Common myeloid progenitor, CD34-positive (primary cell): ENCODE measurements at regions of chr12 and their contacts with region 1.

Region 1: GRCh38 chr12:109432841-109433304 is 44.2 kb downstream of the KCTD10 start:
- DNase-seq: peak; percentile 68 to 84 (median 81)
- H3K4me3 ChIP-seq: peak overlapping the region in 4 of 7 experiments; percentile 4 to 69 (median 28)
- H3K27ac ChIP-seq: no peak overlapping the region
- H3K4me1 ChIP-seq: peaks cover 0 to 7% (median 2%) of the 10 kb centered on the region in 4 experiments
- H3K27me3 ChIP-seq: no peaks in the 10 kb centered on the region

Region 2: GRCh38 chr12:109362471-109362870 is 70.4 kb before region 1 on chr12:
- CTCF ChIA-PET with region 1: no interaction called
- POLR2A ChIA-PET with region 1: no interaction called
- DNase-seq: no peak
- H3K4me3 ChIP-seq: no peak overlapping the region
- H3K27ac ChIP-seq: no peak overlapping the region
- H3K4me1 ChIP-seq: peaks cover 0 to 3% (median 1%) of the 10 kb centered on the region in 4 experiments
- H3K27me3 ChIP-seq: no peaks in the 10 kb centered on the region

Region 3: GRCh38 chr12:109449845-109450532 is 17.1 kb after region 1 on chr12:
- CTCF ChIA-PET with region 1: interaction called, 11 read pairs
- POLR2A ChIA-PET with region 1: no interaction called
- DNase-seq: peak in 2 of 3 donors; percentile 10 to 17
- H3K4me3 ChIP-seq: no peak overlapping the region
- H3K27ac ChIP-seq: no peak overlapping the region
- H3K4me1 ChIP-seq: no peaks in the 10 kb centered on the region
- H3K27me3 ChIP-seq: no peaks in the 10 kb centered on the region

Region 4: DNA sequence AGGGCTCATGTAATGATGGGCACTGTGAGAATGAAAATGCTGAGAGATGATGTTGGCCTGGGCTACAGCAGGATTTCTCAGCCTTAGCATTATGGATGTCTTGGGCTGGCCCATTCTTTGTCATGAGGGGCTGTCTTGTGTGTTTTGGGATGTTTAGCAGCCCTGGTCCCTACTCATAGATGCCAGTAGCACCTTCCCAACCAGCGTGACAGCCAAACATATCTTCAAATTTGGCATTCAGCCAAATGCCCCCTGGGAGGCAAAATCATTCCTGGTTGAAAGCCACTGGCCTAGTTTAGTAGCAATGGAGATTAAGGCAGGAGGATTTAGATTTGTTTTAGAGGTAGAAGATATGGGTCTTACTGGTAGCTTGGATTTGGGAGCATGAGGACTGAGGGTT is 71.2 kb after region 1 on chr12:
- CTCF ChIA-PET with region 1: no interaction called
- POLR2A ChIA-PET with region 1: no interaction called
- DNase-seq: no peak
- H3K4me3 ChIP-seq: no peak overlapping the region
- H3K27ac ChIP-seq: no peak overlapping the region
- H3K4me1 ChIP-seq: no peaks in the 10 kb centered on the region
- H3K27me3 ChIP-seq: no peaks in the 10 kb centered on the region

Region 5: GRCh38 chr12:109544955-109545531 is 112.2 kb after region 1 on chr12:
- CTCF ChIA-PET with region 1: no interaction called
- POLR2A ChIA-PET with region 1: no interaction called
- DNase-seq: peak in 1 of 3 donors; percentile 6
- H3K4me3 ChIP-seq: no peak overlapping the region
- H3K27ac ChIP-seq: no peak overlapping the region
- H3K4me1 ChIP-seq: peaks cover 0 to 8% (median 7%) of the 10 kb centered on the region in 4 experiments
- H3K27me3 ChIP-seq: peaks cover 0 to 24% (median 6%) of the 10 kb centered on the region in 5 experiments